ENCODE measurements at regions of chr7 and their contacts with region 1.

Region 1: DNA sequence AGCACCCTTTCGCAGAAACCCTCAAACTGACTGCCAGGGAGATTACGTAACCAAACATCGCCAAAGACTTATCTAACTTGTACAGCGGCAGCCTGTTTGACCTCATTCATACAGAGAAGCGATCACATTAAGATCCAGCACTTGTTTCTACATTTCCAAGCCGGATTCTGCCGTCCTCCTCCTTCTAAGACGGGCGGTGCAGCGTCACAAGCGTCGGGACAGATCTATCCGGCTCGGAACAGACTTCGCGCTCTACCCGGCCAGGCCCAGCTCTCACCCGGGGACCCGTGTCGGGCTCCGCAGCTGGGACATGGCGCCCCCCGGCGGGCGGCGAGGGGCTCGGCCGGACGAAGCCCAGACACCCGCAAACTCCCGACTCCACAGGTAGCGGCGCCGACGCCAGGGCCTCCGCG is 373 bp downstream of the H2AZ2 start:
- DNase-seq: peak; percentile 92
- ATAC-seq: peak; percentile 69
- H3K4me3 Mint-ChIP-seq: peak overlapping the region; percentile 97
- H3K27ac Mint-ChIP-seq: peak overlapping the region; percentile 99
- H3K4me1 Mint-ChIP-seq: peaks cover 36% of the 10 kb centered on the region
- H3K27me3 Mint-ChIP-seq: no peaks in the 10 kb centered on the region

Region 2: DNA sequence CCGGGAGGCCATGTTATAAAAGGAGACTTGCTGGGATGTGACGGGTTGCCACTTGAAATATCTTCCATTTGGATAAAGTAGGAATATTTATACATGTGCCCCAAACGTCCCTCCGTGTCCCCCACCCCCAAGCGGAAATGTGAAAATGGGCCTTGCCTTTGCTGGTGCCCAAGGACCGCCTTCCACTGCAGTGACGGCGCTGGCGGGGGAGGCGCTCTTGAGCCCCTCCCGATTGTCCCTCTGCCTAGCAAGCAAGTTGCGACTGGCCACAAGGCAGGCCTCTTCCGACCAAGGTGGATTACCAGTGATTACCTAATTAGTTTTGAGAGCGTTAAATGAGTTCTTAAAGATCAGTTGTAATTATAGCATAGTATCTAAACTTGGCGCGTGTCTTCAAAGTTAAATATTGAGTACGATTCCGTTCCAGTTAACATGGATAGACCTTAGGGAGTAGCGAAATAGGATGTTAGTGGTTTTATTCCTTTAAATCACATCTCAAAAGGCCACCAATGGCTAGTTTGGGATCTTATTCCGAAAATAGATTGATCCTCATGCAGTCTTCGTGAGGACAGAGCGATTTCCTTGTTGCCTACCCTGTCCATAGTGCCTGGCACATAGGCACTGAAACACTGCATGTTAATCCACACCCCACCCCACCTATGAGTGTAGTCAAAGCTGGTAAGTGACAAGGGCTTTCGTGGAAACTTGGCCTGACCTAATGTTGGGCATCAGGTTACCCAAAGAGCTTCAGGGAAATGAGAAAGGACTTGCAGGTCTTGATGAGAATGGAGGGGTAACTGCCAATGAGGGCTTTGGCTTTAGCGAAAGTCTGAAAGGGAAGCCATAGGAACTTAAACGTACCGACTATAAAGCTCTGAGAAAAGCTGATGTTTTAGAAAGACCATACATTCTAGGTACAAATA is 49.9 kb before region 1 on chr7:
- CTCF ChIA-PET with region 1: interaction called, 17 read pairs
- DNase-seq: peak; percentile 93
- ATAC-seq: peak; percentile 60
- H3K4me3 Mint-ChIP-seq: peak overlapping the region; percentile 93
- H3K27ac Mint-ChIP-seq: peak overlapping the region; percentile 99
- H3K4me1 Mint-ChIP-seq: peaks cover 38% of the 10 kb centered on the region
- H3K27me3 Mint-ChIP-seq: no peaks in the 10 kb centered on the region

Region 3: DNA sequence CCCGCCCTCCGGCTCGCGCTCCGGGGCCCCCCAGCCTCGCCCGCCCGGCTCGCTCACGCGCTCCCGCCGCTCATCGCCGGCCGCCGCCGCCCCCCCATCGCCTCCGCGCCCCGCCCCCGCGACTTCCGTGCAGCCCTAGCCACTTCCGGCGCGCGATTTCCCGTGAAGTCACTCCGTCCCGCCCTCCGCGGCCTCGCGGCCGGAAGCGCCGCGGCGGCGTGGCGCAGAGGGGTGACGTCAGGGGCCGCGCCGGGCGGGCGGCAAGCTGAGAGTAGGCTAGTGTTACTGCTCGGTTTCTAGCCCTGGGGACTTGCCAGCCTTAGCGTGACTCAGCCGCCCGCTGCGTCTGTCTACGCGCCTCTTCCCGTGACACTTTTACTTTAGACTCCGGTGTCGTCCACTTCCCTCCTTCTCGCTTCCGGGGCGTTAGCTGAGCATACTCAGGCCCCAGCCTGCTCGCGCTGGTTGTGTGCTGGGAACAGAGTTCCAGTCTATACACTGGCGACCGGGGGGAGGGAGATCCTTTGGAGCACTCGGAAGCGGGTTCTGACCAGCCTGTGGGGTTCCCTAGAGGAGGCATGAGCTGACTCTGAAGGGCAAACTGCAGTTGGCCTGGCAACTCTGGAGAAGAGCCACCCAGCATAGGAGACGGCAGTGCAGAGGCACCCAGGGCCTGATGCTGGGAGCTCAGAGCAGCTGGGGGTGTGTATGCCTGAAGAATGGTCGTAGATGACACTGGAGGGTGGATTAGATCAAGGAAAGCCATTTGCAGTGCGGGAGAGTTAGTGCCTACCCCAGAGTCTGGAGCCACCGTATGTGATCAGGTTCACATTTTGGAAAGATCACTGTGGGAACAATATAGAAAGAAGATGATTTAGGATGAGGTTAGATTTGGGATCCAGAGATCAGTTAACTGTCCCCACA is 38.1 kb after region 1 on chr7 and contains the start of gene PURB:
- CTCF ChIA-PET with region 1: interaction called, 134 read pairs
- DNase-seq: peak; percentile 98
- ATAC-seq: peak; percentile 89
- H3K4me3 Mint-ChIP-seq: peak within 1 kb of the TSS; percentile 93
- H3K27ac Mint-ChIP-seq: peak within 1 kb of the TSS; percentile 100
- H3K4me1 Mint-ChIP-seq: peaks cover 56% of the 10 kb centered on the region
- H3K27me3 Mint-ChIP-seq: no peaks in the 10 kb centered on the region
- total RNA-seq, gene PURB: 33.4 to 35.4 TPM

Region 4: DNA sequence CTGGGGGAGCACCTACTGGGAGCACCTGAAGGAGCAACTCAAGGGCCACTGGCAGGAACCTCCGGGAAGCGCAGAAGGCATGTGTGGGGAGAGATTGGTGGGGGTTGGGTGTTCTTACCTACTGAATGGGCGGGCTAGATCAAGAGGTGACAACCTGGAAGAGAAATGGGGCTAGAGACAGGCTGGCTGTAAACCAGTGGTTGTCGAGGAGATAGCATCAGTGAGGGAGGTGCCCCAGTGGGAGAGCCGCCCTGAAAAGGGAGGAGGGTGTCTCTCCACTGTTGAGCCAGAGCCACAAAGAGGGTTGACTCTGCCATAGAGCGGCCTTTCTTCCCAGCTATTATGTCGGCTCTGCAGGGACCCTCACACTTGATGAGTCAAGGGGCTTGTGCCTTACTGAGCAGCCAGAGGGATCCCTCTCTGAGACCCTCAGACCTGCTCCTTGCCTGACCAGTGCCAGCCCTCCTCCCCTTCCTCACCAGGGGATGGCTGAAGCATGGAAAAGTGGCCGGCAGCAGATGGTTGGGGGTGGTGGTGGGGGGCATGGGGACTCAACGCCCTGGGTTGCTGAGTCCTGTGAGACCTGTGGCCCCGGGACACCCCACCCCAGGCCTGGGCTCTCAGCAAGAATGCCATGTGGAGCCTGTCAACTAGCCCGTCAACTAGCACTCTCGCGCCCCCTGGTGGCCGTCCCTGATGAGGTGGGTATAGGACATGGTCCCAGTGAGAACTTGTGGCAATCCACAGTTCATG is 74.3 kb after region 1 on chr7:
- CTCF ChIA-PET with region 1: interaction called, 19 read pairs
- DNase-seq: peak; percentile 96
- ATAC-seq: peak; percentile 99
- H3K4me3 Mint-ChIP-seq: no peak overlapping the region
- H3K27ac Mint-ChIP-seq: peak overlapping the region; percentile 46
- H3K4me1 Mint-ChIP-seq: peaks cover 14% of the 10 kb centered on the region
- H3K27me3 Mint-ChIP-seq: peaks cover 5% of the 10 kb centered on the region

Region 5: GRCh38 chr7:45073786-45074527 is 226.4 kb after region 1 on chr7:
- CTCF ChIA-PET with region 1: no interaction called
- DNase-seq: no peak
- ATAC-seq: no peak
- H3K4me3 Mint-ChIP-seq: no peak overlapping the region
- H3K27ac Mint-ChIP-seq: no peak overlapping the region
- H3K4me1 Mint-ChIP-seq: no peaks in the 10 kb centered on the region
- H3K27me3 Mint-ChIP-seq: no peaks in the 10 kb centered on the region

Measured in activated CD8-positive, alpha-beta memory T cell treated with anti-CD3 and anti-CD28 coated beads, Interleukin-2, amount 10 ng/mL, durations not matched to agents 7 days and 5 days (primary cell).